HEK293 (cell line): ENCODE measurements at regions of chr11 and their contacts with region 1.

Region 1: GRCh38 chr11:65274735-65275682 is 13.2 kb downstream of the POLA2 start:
- H3K4me3 ChIP-seq: no peak overlapping the region
- H3K27ac ChIP-seq: no peak overlapping the region
- H3K4me1 ChIP-seq: no peaks in the 10 kb centered on the region
- CTCF ChIP-seq: 0 out of 2 replicates have a peak, but pooled peaks have one; percentile 43

Region 2: DNA sequence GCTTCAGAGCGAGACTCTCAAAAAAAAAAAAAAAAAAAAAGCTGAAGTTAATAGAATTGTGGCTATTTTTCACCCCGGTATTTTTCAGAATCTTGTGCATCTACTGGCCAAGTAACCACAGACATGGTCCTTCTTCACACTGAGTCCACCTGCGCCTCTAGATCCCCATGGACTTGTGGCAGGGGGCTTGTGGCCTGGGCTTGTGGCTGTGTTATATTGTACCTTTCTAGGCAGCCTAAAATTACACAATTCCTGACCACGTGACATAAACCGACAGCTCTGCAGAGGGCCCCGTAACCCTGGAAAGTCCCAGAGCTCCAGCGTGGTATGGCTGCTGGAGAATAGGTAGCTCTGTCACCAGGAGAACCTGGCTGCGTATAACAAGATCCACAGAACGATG is 205.8 kb before region 1 on chr11:
- CTCF ChIA-PET with region 1: no interaction called
- POLR2A ChIA-PET with region 1: no interaction called
- H3K4me3 ChIP-seq: no peak overlapping the region
- H3K27ac ChIP-seq: no peak overlapping the region
- H3K4me1 ChIP-seq: no peaks in the 10 kb centered on the region
- CTCF ChIP-seq: no peak

Region 3: GRCh38 chr11:65261591-65262380 is 13.2 kb before region 1 on chr11 and contains the start of gene POLA2:
- CTCF ChIA-PET with region 1: interaction called, 15 read pairs
- POLR2A ChIA-PET with region 1: interaction called, 28 read pairs
- H3K4me3 ChIP-seq: peak within 1 kb of the TSS; percentile 79
- H3K27ac ChIP-seq: peak within 1 kb of the TSS; percentile 70
- H3K4me1 ChIP-seq: no peaks in the 10 kb centered on the region
- CTCF ChIP-seq: no peak

Region 4: GRCh38 chr11:65440831-65441499 is 166.0 kb after region 1 on chr11:
- CTCF ChIA-PET with region 1: no interaction called
- POLR2A ChIA-PET with region 1: no interaction called
- H3K4me3 ChIP-seq: no peak overlapping the region
- H3K27ac ChIP-seq: no peak overlapping the region
- H3K4me1 ChIP-seq: no peaks in the 10 kb centered on the region
- CTCF ChIP-seq: no peak